ENCODE measurements at regions of chr6 and their contacts with region 1.

Region 1: DNA sequence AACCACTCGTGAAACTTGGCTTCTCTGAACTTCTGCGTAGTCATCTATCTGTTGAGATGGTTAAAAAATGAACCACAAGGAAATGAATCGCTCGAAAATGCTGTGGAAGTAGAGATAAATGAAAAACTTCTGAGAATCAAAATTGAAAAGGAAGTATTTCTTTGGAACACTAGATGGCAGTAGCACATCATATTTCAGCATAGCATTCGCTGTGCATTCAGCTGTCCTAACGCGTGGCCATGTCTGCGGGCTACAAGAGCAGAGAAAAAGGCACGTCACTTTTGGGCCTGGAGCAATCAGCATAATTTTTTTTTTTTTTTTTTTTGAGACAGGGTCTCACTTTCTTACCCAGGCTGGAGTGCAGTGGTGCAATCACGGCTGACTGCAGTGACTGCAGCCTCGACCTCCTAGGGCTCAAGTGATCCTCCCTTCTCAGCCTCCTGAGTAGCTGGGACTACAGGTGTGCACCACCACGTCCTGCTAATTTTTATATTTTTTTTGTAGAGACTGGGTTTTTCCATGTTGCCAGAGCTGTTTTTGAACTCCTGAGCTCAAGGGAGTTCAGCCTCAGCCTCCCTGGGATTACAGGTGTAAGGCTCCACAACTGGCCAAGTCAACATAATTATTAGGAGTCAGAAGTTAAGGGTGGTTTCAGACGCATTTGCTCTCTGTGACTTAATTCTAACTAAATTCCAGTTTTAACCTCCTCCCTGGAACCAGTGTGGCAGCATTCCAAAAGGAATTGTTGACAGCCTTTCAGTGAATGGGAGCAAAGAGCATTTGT is 8.8 kb upstream of the PERP start:
- H3K4me3 Mint-ChIP-seq: no peak overlapping the region
- H3K27ac Mint-ChIP-seq: no peak overlapping the region
- H3K4me1 Mint-ChIP-seq: peaks cover 7% of the 10 kb centered on the region
- H3K27me3 Mint-ChIP-seq: peaks cover 26% of the 10 kb centered on the region

Region 2: GRCh38 chr6:137631323-137631722 is 484.7 kb before region 1 on chr6:
- intact Hi-C with region 1: no loop called
- H3K4me3 Mint-ChIP-seq: no peak overlapping the region
- H3K27ac Mint-ChIP-seq: no peak overlapping the region
- H3K4me1 Mint-ChIP-seq: peaks cover 2% of the 10 kb centered on the region
- H3K27me3 Mint-ChIP-seq: peaks cover 4% of the 10 kb centered on the region

Region 3: DNA sequence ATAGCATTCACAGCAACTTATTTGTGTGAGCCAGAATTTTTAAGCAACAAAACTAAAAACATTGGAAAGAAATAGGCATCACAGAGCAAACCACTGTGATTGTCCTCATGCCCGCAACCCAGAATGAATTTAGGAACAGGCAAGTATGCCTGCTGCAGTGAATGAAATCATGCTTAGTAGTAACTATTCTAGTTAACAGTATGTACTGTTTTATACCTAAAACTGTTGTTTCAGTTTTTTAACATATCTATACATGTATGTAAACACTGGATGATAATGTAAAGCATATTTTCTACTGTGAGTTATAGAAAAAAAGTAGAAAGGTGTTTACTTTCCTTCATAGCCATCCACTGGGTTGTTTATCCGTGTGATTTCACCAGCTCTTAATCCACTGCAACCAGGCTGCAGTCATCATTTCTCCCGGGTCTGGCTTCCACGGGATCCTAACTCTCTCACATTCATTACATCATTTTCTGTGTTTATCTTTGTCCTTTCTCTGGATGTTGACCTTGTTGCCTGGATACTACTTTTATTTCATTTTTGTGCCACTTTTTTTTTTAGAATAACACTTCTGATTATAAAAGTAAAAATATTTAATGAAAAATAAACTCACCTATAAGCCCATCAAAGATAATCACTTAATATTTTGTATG is 42.0 kb after region 1 on chr6:
- intact Hi-C with region 1: no loop called
- H3K4me3 Mint-ChIP-seq: no peak overlapping the region
- H3K27ac Mint-ChIP-seq: no peak overlapping the region
- H3K4me1 Mint-ChIP-seq: peaks cover 14% of the 10 kb centered on the region
- H3K27me3 Mint-ChIP-seq: peaks cover 54% of the 10 kb centered on the region

Region 4: GRCh38 chr6:138287144-138287955 is 171.3 kb after region 1 on chr6:
- intact Hi-C with region 1: loop called (anchors 2 kb)
- H3K4me3 Mint-ChIP-seq: no peak overlapping the region
- H3K27ac Mint-ChIP-seq: no peak overlapping the region
- H3K4me1 Mint-ChIP-seq: no peaks in the 10 kb centered on the region
- H3K27me3 Mint-ChIP-seq: no peaks in the 10 kb centered on the region

Region 5: DNA sequence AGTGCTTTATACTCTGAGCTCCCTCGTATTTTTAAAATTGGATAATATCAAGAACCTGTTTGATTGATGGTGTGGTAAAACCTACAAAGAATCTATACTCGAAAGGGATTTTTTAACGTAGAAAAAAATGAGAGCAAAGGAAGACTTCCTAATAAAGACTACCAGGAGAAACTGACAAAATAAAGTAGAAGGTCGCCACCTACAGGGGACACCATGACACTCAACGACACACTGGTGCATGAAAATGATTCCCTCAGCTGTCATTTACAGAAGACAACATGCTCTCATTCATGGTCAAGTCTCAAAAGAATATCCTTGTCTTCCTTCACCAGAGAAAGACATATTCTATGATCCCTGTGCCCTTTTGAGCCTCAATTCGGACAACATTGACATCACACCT is 393.3 kb after region 1 on chr6:
- intact Hi-C with region 1: loop called (anchors 5 kb)
- H3K4me3 Mint-ChIP-seq: no peak overlapping the region
- H3K27ac Mint-ChIP-seq: no peak overlapping the region
- H3K4me1 Mint-ChIP-seq: peaks cover 8% of the 10 kb centered on the region
- H3K27me3 Mint-ChIP-seq: no peaks in the 10 kb centered on the region

Measured in dendritic cell treated with granulocyte-macrophage colony-stimulating factor and Interleukin-4, amounts not matched to agents 40 ng/mL and 50 ng/mL, for 4 days (primary cell).